PC-9 (cell line): ENCODE measurements at regions of chr5 and their contacts with region 1.

Region 1: GRCh38 chr5:159444441-159445082 is 114.3 kb upstream of the IL12B start:
- DNase-seq: peak; percentile 38 to 65
- H3K4me3 ChIP-seq: no peak overlapping the region
- H3K27ac ChIP-seq: no peak overlapping the region
- H3K4me1 ChIP-seq: peaks cover 9% of the 10 kb centered on the region
- H3K27me3 ChIP-seq: no peaks in the 10 kb centered on the region
- CTCF ChIP-seq: peak; percentile 74

Region 2: GRCh38 chr5:159083548-159084452 is 360.8 kb before region 1 on chr5:
- CTCF ChIA-PET with region 1: no interaction called
- POLR2A ChIA-PET with region 1: no interaction called
- intact Hi-C with region 1: no loop called
- DNase-seq: no peak
- H3K4me3 ChIP-seq: no peak overlapping the region
- H3K27ac ChIP-seq: no peak overlapping the region
- H3K4me1 ChIP-seq: no peaks in the 10 kb centered on the region
- H3K27me3 ChIP-seq: peaks cover 85% of the 10 kb centered on the region
- CTCF ChIP-seq: no peak

Region 3: GRCh38 chr5:159156426-159157238 is 287.9 kb before region 1 on chr5:
- CTCF ChIA-PET with region 1: no interaction called
- POLR2A ChIA-PET with region 1: no interaction called
- intact Hi-C with region 1: loop called (anchors 2 kb)
- DNase-seq: peak; percentile 38 to 42
- H3K4me3 ChIP-seq: no peak overlapping the region
- H3K27ac ChIP-seq: peak overlapping the region; percentile 25; the same call in 1 of the 2 replicates
- H3K4me1 ChIP-seq: no peaks in the 10 kb centered on the region
- H3K27me3 ChIP-seq: no peaks in the 10 kb centered on the region
- CTCF ChIP-seq: peak; percentile 92

Region 4: GRCh38 chr5:159331093-159331973 is 113.2 kb before region 1 on chr5:
- CTCF ChIA-PET with region 1: no interaction called
- POLR2A ChIA-PET with region 1: no interaction called
- intact Hi-C with region 1: loop called (anchors 5 kb)
- DNase-seq: peak in 1 of 2 experiments; percentile 73
- H3K4me3 ChIP-seq: peak overlapping the region; percentile 56; the same call in 1 of the 2 replicates
- H3K27ac ChIP-seq: no peak overlapping the region
- H3K4me1 ChIP-seq: no peaks in the 10 kb centered on the region
- H3K27me3 ChIP-seq: peaks cover 24% of the 10 kb centered on the region
- CTCF ChIP-seq: peak; percentile 87

Region 5: DNA sequence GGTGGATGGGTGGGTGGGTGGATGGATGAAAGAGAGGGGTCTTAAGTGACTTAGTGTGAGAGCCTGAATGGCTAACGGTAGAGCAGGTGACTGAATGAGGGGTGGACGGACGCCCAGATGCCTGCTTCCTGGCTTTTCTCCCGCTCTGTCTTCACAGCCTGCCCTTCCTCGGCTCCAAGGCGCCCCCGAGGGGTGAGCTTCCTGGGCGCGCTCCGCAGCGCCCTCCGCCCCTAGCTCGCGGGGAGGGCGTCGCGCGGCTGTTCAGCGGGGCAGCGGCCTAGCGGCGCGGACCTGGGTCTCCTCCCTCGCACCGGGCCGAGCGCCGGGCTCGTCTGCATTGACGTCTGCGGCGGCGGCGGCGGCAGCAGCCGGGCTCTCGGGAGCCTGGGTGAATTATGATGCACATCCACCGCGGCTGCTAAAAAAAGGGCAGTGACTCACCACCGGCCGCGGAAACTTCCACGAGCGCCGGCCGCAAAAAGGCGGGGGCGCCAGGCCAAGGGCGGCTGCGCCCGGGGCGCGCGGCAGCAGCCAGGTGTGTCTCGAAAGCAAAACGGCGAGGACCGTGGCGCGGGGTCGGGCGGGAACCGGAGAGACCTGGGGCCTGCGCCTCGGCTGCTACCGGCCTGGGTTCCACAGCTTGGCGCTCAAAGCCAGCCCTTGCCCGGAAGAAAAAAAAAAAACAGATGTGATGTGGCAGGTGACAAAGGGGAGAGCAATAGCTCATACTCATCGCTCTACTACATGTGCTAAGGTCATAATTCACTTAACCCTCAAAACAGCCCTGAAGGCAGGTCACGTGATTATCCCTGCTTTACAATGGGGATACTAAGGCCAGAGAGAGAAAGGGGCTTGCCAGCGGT is 328.7 kb after region 1 on chr5:
- CTCF ChIA-PET with region 1: no interaction called
- POLR2A ChIA-PET with region 1: no interaction called
- intact Hi-C with region 1: loop called (anchors 2 kb)
- DNase-seq: peak; percentile 71 to 83
- H3K4me3 ChIP-seq: peak overlapping the region; percentile 61
- H3K27ac ChIP-seq: peak overlapping the region; percentile 66
- H3K4me1 ChIP-seq: peaks cover 33% of the 10 kb centered on the region
- H3K27me3 ChIP-seq: no peaks in the 10 kb centered on the region
- CTCF ChIP-seq: peak; percentile 38; the same call in 1 of the 2 replicates

Region 6: GRCh38 chr5:159826351-159827214 is 382.0 kb after region 1 on chr5:
- CTCF ChIA-PET with region 1: no interaction called
- POLR2A ChIA-PET with region 1: no interaction called
- intact Hi-C with region 1: loop called (anchors 1 kb)
- DNase-seq: peak; percentile 84 to 99
- H3K4me3 ChIP-seq: no peak overlapping the region
- H3K27ac ChIP-seq: peak overlapping the region; percentile 99
- H3K4me1 ChIP-seq: peaks cover 64% of the 10 kb centered on the region
- H3K27me3 ChIP-seq: no peaks in the 10 kb centered on the region
- CTCF ChIP-seq: no peak

Region 7: GRCh38 chr5:160399402-160400353 is 955.1 kb after region 1 on chr5 and contains the start of gene FAM200C:
- CTCF ChIA-PET with region 1: no interaction called
- POLR2A ChIA-PET with region 1: no interaction called
- intact Hi-C with region 1: loop called (anchors 10 kb)
- DNase-seq: peak; percentile 82 to 92
- H3K4me3 ChIP-seq: peak within 1 kb of the TSS; percentile 60
- H3K27ac ChIP-seq: peak within 1 kb of the TSS; percentile 38
- H3K4me1 ChIP-seq: peaks cover 11% of the 10 kb centered on the region
- H3K27me3 ChIP-seq: no peaks in the 10 kb centered on the region
- CTCF ChIP-seq: no peak
- total RNA-seq, gene FAM200C: 8.6 and 10.5 TPM in 2 replicates

Region 8: DNA sequence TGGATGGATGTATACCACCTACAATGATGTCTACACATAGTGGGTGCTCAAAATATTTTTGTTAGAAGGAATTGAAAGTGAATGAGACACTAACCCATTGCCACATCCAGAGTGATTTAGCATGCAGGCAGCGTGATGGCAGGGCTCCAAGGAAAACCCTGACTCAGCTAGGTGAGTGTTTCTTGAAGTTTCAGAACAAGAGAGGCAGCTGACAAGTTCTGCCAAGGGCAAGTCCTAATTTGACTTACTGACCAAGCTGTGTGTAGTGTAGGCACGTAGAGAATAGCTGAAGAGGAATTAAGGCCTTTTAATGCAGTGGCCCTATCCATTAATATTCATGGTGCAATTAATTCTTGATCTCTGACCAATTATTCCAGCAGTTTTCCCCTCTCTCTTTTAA is 1515.2 kb after region 1 on chr5:
- CTCF ChIA-PET with region 1: no interaction called
- POLR2A ChIA-PET with region 1: no interaction called
- intact Hi-C with region 1: no loop called
- DNase-seq: peak in 1 of 2 experiments; percentile 37
- H3K4me3 ChIP-seq: no peak overlapping the region
- H3K27ac ChIP-seq: no peak overlapping the region
- H3K4me1 ChIP-seq: no peaks in the 10 kb centered on the region
- H3K27me3 ChIP-seq: no peaks in the 10 kb centered on the region
- CTCF ChIP-seq: no peak